CD4-positive, alpha-beta memory T cell (primary cell): ENCODE measurements at regions of chr4 and their contacts with region 1.

Region 1: DNA sequence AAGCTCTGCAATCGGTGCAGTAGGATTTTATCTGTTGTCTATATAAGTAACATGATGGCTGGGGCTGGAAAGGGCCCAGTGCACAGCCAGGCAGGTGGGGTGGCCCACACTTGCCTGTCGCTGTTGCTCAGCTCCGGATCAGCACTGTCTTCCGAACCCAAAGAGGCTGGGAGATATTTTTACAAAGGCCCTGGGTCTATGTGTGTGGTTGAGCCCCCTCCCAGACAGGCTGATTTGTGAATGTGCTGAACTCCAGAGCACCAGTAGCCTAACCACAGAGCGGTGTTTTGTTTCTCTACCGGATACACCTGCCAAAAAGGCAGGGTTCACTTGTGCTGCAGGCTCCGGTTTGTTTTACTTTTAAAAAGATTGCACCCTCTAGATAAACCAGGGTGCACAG is 33.5 kb upstream of the CHRNA9 start:
- DNase-seq: peak; percentile 82 to 90 (median 89)
- H3K4me3 ChIP-seq: peak overlapping the region in 1 of 2 donors; percentile 2
- H3K4me3 Mint-ChIP-seq: peak overlapping the region; percentile 23 to 92 (median 78)
- H3K27ac ChIP-seq: peak overlapping the region; percentile 62
- H3K27ac Mint-ChIP-seq: peak overlapping the region in 6 of 7 donors; percentile 96 to 99 (median 97)
- H3K4me1 ChIP-seq: peaks cover 94% of the 10 kb centered on the region
- H3K4me1 Mint-ChIP-seq: peaks cover 66 to 90% (median 79%) of the 10 kb centered on the region in 4 donors
- H3K27me3 ChIP-seq: no peaks in the 10 kb centered on the region
- H3K27me3 Mint-ChIP-seq: no peaks in the 10 kb centered on the region

Region 2: DNA sequence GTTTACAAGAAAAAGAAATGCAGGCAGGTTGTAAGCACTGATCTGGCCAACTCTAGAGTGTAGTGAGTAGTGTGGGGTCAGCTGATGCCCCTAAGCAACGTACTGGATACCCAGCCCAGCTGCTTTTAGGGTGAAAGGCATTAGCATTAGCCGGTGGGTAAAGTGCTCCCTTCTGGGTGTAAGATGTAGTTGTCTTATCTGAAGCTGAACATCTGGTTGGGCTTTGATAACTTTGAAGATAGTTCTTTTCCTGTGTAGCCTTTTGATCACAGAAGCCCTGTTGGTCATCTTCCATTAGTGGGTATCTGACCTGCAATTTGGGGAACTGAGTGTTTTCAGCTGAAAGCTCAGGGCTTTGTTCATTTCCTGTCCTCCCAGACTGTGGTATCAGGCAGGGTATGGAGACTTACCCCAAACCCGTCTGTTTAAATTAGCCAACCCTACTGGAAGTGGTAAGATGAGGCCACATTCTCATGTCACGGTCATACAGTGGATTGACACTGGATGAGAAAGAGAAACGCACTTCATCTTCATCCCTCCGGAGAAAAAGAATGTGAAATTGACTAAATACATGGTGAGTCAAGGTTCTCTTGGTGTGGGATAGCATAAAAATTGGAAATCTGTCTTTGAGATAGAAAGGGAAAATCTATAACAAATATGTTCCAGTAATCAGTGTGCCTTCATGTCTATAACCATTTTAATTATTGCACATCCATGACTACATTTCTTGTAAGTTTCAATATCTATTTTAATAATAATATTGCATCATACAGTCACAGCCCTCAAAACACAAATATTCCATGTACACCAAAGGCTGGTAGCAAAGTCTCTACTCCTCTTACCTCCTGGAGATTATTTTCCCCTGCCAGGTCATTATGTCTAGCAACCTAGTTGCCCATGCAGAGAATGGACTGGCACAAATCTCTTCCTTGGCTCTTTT is 96.1 kb before region 1 on chr4:
- CTCF ChIA-PET with region 1: interaction called, 115 read pairs
- POLR2A ChIA-PET with region 1: interaction called, 179 read pairs
- intact Hi-C with region 1: no loop called
- DNase-seq: peak in 4 of 5 donors; percentile 44 to 68 (median 49)
- H3K4me3 ChIP-seq: peak overlapping the region; percentile 39 to 67
- H3K4me3 Mint-ChIP-seq: peak overlapping the region; percentile 86 to 100 (median 96)
- H3K27ac ChIP-seq: peak overlapping the region; percentile 99
- H3K27ac Mint-ChIP-seq: peak overlapping the region; percentile 92 to 100 (median 96)
- H3K4me1 ChIP-seq: peaks cover 75% of the 10 kb centered on the region
- H3K4me1 Mint-ChIP-seq: peaks cover 48 to 87% (median 61%) of the 10 kb centered on the region in 4 donors
- H3K27me3 ChIP-seq: no peaks in the 10 kb centered on the region
- H3K27me3 Mint-ChIP-seq: no peaks in the 10 kb centered on the region

Region 3: GRCh38 chr4:40238700-40239548 is 62.7 kb before region 1 on chr4:
- CTCF ChIA-PET with region 1: interaction called, 200 read pairs
- POLR2A ChIA-PET with region 1: interaction called, 12 read pairs
- intact Hi-C with region 1: no loop called
- DNase-seq: peak; percentile 85 to 97 (median 87)
- H3K4me3 ChIP-seq: peak overlapping the region; percentile 48 to 53
- H3K4me3 Mint-ChIP-seq: peak overlapping the region; percentile 73 to 87 (median 80)
- H3K27ac ChIP-seq: peak overlapping the region; percentile 89
- H3K27ac Mint-ChIP-seq: peak overlapping the region; percentile 95 to 100 (median 97)
- H3K4me1 ChIP-seq: peaks cover 98% of the 10 kb centered on the region
- H3K4me1 Mint-ChIP-seq: peaks cover 73 to 96% (median 86%) of the 10 kb centered on the region in 4 donors
- H3K27me3 ChIP-seq: no peaks in the 10 kb centered on the region
- H3K27me3 Mint-ChIP-seq: no peaks in the 10 kb centered on the region

Region 4: GRCh38 chr4:40247350-40247749 is 54.3 kb before region 1 on chr4:
- CTCF ChIA-PET with region 1: interaction called, 3 read pairs
- POLR2A ChIA-PET with region 1: interaction called, 48 read pairs
- intact Hi-C with region 1: no loop called
- DNase-seq: peak; percentile 66 to 82 (median 69)
- H3K4me3 ChIP-seq: no peak overlapping the region
- H3K4me3 Mint-ChIP-seq: peak overlapping the region in 7 of 8 donors; percentile 19 to 75 (median 58)
- H3K27ac ChIP-seq: peak overlapping the region; percentile 68
- H3K27ac Mint-ChIP-seq: peak overlapping the region; percentile 80 to 100 (median 96)
- H3K4me1 ChIP-seq: peaks cover 88% of the 10 kb centered on the region
- H3K4me1 Mint-ChIP-seq: peaks cover 65 to 92% (median 74%) of the 10 kb centered on the region in 4 donors
- H3K27me3 ChIP-seq: no peaks in the 10 kb centered on the region
- H3K27me3 Mint-ChIP-seq: no peaks in the 10 kb centered on the region

Region 5: DNA sequence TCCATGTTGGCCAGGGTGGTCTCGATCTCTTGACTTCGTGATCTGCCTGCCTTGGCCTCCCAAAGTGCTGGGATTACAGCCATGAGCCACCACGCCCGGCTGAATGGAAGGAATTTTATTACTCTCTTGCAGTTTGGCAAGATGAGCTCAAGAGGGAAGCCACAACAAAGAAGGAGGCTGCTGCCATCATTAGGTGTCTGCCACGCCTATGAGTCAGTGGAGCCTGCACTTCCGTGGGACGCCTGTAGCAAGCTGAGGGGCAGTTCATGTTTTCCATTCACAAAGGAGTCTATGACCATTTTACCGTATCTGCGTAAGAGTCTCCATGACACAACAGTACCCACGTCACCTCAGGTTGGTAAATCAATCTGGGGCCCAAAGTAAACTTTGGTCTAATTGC is 17.6 kb before region 1 on chr4:
- CTCF ChIA-PET with region 1: interaction called, 271 read pairs
- POLR2A ChIA-PET with region 1: interaction called, 87 read pairs
- intact Hi-C with region 1: loop called (anchors 1 kb)
- DNase-seq: peak; percentile 71 to 97 (median 86)
- H3K4me3 ChIP-seq: no peak overlapping the region
- H3K4me3 Mint-ChIP-seq: peak overlapping the region in 7 of 8 donors; percentile 70 to 86 (median 79)
- H3K27ac ChIP-seq: peak overlapping the region; percentile 49
- H3K27ac Mint-ChIP-seq: peak overlapping the region; percentile 92 to 98 (median 96)
- H3K4me1 ChIP-seq: peaks cover 39% of the 10 kb centered on the region
- H3K4me1 Mint-ChIP-seq: peaks cover 34 to 73% (median 55%) of the 10 kb centered on the region in 4 donors
- H3K27me3 ChIP-seq: no peaks in the 10 kb centered on the region
- H3K27me3 Mint-ChIP-seq: peaks cover 0 to 2% of the 10 kb centered on the region in 2 donors

Region 6: DNA sequence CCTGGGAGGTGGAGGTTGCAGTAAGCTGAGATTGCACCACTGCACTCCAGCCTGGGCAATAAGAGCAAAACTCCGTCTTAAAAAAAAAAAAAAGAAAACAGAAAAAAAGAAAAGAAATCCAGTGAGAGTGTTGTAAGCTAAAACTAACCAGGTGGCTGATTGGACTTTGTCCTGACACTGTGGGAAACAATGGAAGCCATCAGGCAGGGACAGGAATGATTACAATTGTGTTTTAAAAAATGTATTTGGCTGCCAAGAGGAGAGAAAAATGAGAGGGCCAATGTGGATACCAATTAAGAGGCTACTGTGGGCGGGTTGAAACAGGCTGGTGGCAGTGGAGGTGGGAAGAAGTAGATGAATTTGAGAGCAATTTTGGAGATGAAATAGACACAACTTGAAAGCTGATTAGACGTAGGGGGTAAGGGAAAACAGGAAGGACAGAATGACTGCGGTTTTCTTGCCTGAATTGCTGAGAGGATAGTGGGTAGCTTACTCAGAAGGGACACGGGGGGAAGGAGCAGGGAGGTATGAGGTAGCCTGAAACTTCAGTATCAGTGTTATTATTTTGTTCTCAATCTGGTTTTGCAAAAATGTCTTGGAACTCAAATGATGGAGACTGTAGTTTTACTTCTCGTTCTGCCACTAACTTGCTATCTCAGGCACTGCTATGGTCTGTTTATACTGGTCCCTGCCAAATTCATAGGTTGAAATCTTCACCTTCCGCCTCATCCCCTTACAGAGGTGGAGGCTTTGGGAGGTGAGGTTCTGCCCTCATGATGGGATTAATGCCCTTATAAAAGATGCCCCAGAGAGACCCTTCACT is 12.0 kb before region 1 on chr4:
- CTCF ChIA-PET with region 1: interaction called, 271 read pairs
- POLR2A ChIA-PET with region 1: interaction called, 87 read pairs
- intact Hi-C with region 1: loop called (anchors 1 kb)
- DNase-seq: peak; percentile 36 to 69 (median 43)
- H3K4me3 ChIP-seq: no peak overlapping the region
- H3K4me3 Mint-ChIP-seq: peak overlapping the region; percentile 7 to 81 (median 76)
- H3K27ac ChIP-seq: peak overlapping the region; percentile 27
- H3K27ac Mint-ChIP-seq: peak overlapping the region; percentile 65 to 96 (median 88)
- H3K4me1 ChIP-seq: peaks cover 47% of the 10 kb centered on the region
- H3K4me1 Mint-ChIP-seq: peaks cover 41 to 79% (median 55%) of the 10 kb centered on the region in 4 donors
- H3K27me3 ChIP-seq: no peaks in the 10 kb centered on the region
- H3K27me3 Mint-ChIP-seq: no peaks in the 10 kb centered on the region